Heart left ventricle (tissue), 16 donors: ENCODE measurements at regions of chr15 and their contacts with region 1.

Region 1: DNA sequence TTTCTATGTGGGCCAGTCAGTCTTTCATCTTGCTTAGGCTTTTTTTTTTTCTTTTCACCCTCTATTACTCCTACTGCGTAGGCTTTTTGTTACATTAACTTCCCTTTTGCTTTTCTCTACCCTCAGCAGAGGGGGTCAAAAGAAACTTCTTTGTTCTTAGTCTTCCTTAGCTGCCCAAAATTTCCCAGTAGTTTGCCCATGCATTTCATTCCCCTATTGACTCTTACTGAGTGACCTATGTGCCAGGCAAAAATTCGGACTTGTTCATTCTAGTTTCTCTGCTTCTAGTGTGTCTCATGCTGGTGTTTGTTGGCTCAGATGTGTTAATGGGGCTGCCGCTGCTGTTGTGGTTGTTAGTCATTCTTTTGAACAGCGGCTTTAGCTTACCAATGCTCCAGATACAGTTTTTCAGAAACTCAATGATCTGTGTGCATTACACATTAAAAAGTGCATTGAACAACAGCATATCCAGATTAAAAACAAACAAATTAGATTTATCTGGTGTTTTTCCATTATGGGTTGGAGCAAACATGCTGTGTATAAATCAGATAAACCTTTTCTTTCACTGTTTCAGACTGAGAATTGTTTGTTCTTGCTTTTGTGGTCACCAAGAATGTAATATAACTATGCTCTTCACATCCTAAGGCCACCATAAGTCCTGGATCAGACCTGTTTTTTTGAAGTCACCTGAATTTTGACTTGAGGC is 43.0 kb downstream of the PDE8A start:
- DNase-seq: no peak
- ATAC-seq: no peak
- H3K4me3 ChIP-seq: no peak overlapping the region
- H3K27ac ChIP-seq: no peak overlapping the region
- H3K4me1 ChIP-seq: peaks cover 6 to 72% (median 43%) of the 10 kb centered on the region in 12 donors
- H3K27me3 ChIP-seq: no peaks in the 10 kb centered on the region
- CTCF ChIP-seq: no peak
- POLR2A ChIP-seq: no peak

Region 2: DNA sequence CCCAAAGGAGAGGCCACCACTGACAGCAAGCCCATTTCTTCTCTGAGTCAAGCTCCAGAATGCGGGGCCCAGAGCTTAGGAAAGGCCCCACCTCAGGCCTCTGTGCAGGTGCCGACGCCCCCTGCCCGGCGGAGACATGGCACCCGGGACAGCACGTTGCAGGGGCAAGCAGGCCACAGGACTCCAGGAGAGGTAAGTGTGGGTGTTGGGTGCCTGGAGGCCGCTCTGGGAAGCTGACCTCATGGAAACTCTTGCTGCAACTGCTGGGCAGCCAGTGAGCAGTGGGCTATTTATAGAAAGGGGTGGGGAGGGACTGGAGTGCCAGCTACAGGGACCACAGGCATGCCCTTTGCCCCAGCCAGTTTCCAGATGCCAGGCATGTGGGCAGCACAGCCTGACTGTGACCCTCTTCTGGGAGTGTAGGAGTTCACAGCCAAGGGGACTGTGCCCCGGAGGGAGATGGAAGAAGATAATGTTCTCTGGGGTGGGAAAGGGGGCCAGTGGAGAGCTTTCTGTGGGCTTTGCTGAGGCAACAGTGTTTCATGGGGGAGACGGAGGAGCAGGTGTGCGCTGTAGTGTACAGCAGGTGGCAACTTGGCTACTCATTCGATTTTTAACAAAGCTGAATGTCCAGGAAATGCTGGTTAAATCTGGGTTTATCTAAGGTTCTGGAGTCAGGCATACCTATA is 183.8 kb before region 1 on chr15:
- intact Hi-C with region 1: no loop called
- DNase-seq: peak; percentile 77 to 92 (median 87)
- ATAC-seq: peak; percentile 74 to 88 (median 86)
- H3K4me3 ChIP-seq: peak overlapping the region in 5 of 12 donors; percentile 2 to 15 (median 6)
- H3K27ac ChIP-seq: peak overlapping the region; percentile 85 to 99 (median 96)
- H3K4me1 ChIP-seq: peaks cover 0 to 85% (median 44%) of the 10 kb centered on the region in 12 donors
- H3K27me3 ChIP-seq: no peaks in the 10 kb centered on the region
- CTCF ChIP-seq: no peak
- POLR2A ChIP-seq: peak in 1 of 2 donors; percentile 77

Region 3: GRCh38 chr15:84967380-84967779 is 57.3 kb before region 1 on chr15:
- intact Hi-C with region 1: no loop called
- DNase-seq: peak in 1 of 5 donors; percentile 2
- ATAC-seq: no peak
- H3K4me3 ChIP-seq: no peak overlapping the region
- H3K27ac ChIP-seq: no peak overlapping the region
- H3K4me1 ChIP-seq: peaks cover 0 to 6% (median 0%) of the 10 kb centered on the region in 12 donors
- H3K27me3 ChIP-seq: no peaks in the 10 kb centered on the region
- CTCF ChIP-seq: no peak
- POLR2A ChIP-seq: no peak

Region 4: DNA sequence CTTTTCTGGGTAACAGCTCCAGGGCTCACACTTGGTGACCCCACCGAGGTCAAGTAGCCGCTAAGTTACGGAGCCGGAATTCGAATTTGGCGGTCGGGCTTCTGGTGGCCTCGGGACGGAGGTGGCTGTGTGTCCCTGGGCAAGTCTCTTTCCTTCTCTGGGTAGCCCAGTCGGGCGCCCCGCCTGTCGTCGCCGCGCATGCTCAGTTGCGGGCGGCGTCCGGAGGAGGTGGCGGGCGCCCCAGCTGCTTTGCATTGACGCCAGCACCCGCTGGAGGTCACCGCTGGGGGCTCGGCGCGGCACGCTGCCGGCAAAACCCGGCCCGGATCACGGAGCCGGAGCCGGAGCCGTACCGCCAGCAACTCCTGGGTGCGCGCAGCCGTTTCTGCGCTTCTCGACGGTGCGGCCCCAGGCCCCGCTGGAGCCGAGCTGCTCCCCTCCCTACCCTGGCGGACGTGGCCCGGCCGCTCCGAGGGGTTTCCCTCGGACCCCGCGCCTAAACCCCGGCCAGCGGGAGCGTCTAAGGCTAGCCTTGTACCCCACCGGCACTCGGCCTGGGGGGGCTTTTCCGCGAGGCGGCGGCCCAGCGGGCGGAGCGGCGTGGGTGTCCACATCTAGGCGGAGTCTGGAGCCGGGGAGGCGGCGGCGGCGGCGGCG is 43.5 kb before region 1 on chr15:
- intact Hi-C with region 1: loop called in 6 of 10 experiments (anchors 5 kb)
- DNase-seq: peak; percentile 96 to 99 (median 97)
- ATAC-seq: peak; percentile 87 to 93 (median 91)
- H3K4me3 ChIP-seq: peak overlapping the region; percentile 64 to 96 (median 84)
- H3K27ac ChIP-seq: peak overlapping the region; percentile 84 to 98 (median 95)
- H3K4me1 ChIP-seq: peaks cover 0 to 46% (median 28%) of the 10 kb centered on the region in 12 donors
- H3K27me3 ChIP-seq: no peaks in the 10 kb centered on the region
- CTCF ChIP-seq: peak in 10 of 12 donors; percentile 15 to 51 (median 34)
- POLR2A ChIP-seq: peak in 1 of 2 donors; percentile 39

Region 5: GRCh38 chr15:84987949-84988624 is 36.6 kb before region 1 on chr15:
- intact Hi-C with region 1: loop called in 6 of 10 experiments (anchors 5 kb)
- DNase-seq: no peak
- ATAC-seq: no peak
- H3K4me3 ChIP-seq: no peak overlapping the region
- H3K27ac ChIP-seq: peak overlapping the region in 1 of 12 donors; percentile 39
- H3K4me1 ChIP-seq: peaks cover 3 to 89% (median 60%) of the 10 kb centered on the region in 12 donors
- H3K27me3 ChIP-seq: no peaks in the 10 kb centered on the region
- CTCF ChIP-seq: no peak
- POLR2A ChIP-seq: no peak

Region 6: GRCh38 chr15:85005319-85005718 is 19.3 kb before region 1 on chr15:
- intact Hi-C with region 1: loop called in 1 of 10 experiments (anchors 1 kb)
- DNase-seq: no peak
- ATAC-seq: no peak
- H3K4me3 ChIP-seq: no peak overlapping the region
- H3K27ac ChIP-seq: peak overlapping the region in 1 of 12 donors; percentile 47
- H3K4me1 ChIP-seq: peaks cover 18 to 92% (median 64%) of the 10 kb centered on the region in 12 donors
- H3K27me3 ChIP-seq: no peaks in the 10 kb centered on the region
- CTCF ChIP-seq: peak in 2 of 12 donors; percentile 17 to 25
- POLR2A ChIP-seq: no peak

Region 7: GRCh38 chr15:85625856-85626255 is 601.2 kb after region 1 on chr15:
- intact Hi-C with region 1: no loop called
- DNase-seq: no peak
- ATAC-seq: peak in 3 of 4 donors; percentile 12 to 46 (median 36)
- H3K4me3 ChIP-seq: no peak overlapping the region
- H3K27ac ChIP-seq: peak overlapping the region; percentile 31 to 91 (median 82)
- H3K4me1 ChIP-seq: peaks cover 16 to 98% (median 84%) of the 10 kb centered on the region in 12 donors
- H3K27me3 ChIP-seq: no peaks in the 10 kb centered on the region
- CTCF ChIP-seq: no peak
- POLR2A ChIP-seq: no peak